Activated B cell treated with CpG ODN at 0.5 μM for 24 hours (primary cell): ENCODE measurements at regions of chr1 and their contacts with region 1.

Region 1: DNA sequence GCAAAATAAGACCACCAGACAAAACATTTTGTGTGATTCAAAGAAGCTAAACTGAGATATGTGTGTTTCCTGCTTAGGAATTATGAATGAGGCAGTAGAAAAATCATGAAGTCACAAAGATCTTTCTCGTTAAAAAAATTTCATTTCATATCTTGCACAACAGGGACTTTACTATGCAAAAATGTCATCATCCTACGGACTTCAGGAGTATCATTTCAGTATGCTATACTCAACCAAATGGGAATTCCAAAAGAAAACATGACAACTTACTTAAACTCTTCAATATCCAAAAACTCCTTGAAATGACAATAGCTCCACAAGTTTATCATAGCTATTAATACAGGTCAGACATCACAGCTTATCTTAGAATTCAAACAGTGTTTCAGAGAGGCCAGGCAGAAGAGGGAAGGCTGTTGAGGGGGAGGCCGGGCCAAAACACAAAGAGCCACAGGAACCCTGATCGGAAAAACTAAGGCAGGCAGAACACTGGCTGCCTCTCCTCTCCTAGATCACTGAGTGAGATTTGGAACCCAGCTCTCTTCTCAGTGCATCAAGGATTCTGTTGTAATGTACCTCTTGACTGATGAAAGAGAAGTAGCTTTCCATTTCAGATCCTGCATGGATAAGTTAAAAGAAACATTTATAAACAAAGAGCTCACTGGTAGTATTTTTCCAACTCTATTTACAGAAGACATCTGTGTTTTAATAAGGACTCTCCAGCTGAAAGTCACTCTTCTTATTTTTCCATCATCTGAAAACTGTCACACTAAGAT is 66.9 kb downstream of the TESK2 start:
- DNase-seq: no peak
- ATAC-seq: no peak
- H3K4me3 Mint-ChIP-seq: no peak overlapping the region
- H3K27ac Mint-ChIP-seq: no peak overlapping the region
- H3K4me1 Mint-ChIP-seq: peaks cover 1% of the 10 kb centered on the region
- H3K27me3 Mint-ChIP-seq: no peaks in the 10 kb centered on the region
- CTCF ChIP-seq: no peak

Region 2: DNA sequence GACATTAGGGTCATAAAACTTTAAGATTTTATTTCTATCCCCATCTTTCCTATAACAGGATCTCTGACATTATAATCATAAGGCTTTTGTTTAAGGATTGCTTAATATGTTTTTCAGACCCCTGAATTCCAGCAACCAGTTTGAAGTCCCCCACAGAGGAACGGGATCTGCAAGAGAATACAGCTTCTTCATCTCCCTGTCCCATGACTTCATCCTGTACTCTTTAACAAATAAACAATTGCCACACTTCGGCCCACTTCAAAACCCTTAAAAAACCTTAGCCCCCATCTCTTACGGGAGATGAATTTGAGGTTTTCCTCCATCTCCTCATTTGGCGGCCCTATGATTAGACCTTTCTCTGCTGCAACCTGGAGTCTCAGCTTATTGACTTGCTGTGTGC is 31.1 kb after region 1 on chr1:
- CTCF ChIA-PET with region 1: no interaction called
- POLR2A ChIA-PET with region 1: interaction called, 10 read pairs
- intact Hi-C with region 1: no loop called
- DNase-seq: no peak
- ATAC-seq: no peak
- H3K4me3 Mint-ChIP-seq: no peak overlapping the region
- H3K27ac Mint-ChIP-seq: no peak overlapping the region
- H3K4me1 Mint-ChIP-seq: peaks cover 18% of the 10 kb centered on the region
- H3K27me3 Mint-ChIP-seq: no peaks in the 10 kb centered on the region
- CTCF ChIP-seq: no peak